CD4-positive, alpha-beta memory T cell (primary cell): ENCODE measurements at regions of chr7 and their contacts with region 1.

Region 1: GRCh38 chr7:85023045-85023712 is 163.7 kb downstream of the SEMA3D start:
- DNase-seq: peak; percentile 7 to 27 (median 16)
- H3K4me3 ChIP-seq: no peak overlapping the region
- H3K4me3 Mint-ChIP-seq: no peak overlapping the region
- H3K27ac ChIP-seq: no peak overlapping the region
- H3K27ac Mint-ChIP-seq: no peak overlapping the region
- H3K4me1 ChIP-seq: no peaks in the 10 kb centered on the region
- H3K4me1 Mint-ChIP-seq: no peaks in the 10 kb centered on the region
- H3K27me3 ChIP-seq: no peaks in the 10 kb centered on the region
- H3K27me3 Mint-ChIP-seq: no peaks in the 10 kb centered on the region

Region 2: GRCh38 chr7:83936056-83936708 is 1087.0 kb before region 1 on chr7:
- CTCF ChIA-PET with region 1: interaction called, 6 read pairs
- POLR2A ChIA-PET with region 1: no interaction called
- intact Hi-C with region 1: loop called (anchors 1 kb)
- DNase-seq: peak in 4 of 5 donors; percentile 20 to 41 (median 26)
- H3K4me3 ChIP-seq: no peak overlapping the region
- H3K4me3 Mint-ChIP-seq: no peak overlapping the region
- H3K27ac ChIP-seq: no peak overlapping the region
- H3K27ac Mint-ChIP-seq: no peak overlapping the region
- H3K4me1 ChIP-seq: no peaks in the 10 kb centered on the region
- H3K4me1 Mint-ChIP-seq: peaks cover 0 to 1% (median 0%) of the 10 kb centered on the region in 4 donors
- H3K27me3 ChIP-seq: no peaks in the 10 kb centered on the region
- H3K27me3 Mint-ChIP-seq: no peaks in the 10 kb centered on the region

Region 3: GRCh38 chr7:83976295-83976694 is 1046.9 kb before region 1 on chr7:
- CTCF ChIA-PET with region 1: interaction called, 3 read pairs
- POLR2A ChIA-PET with region 1: no interaction called
- intact Hi-C with region 1: loop called (anchors 1 kb)
- DNase-seq: peak in 4 of 5 donors; percentile 18 to 33 (median 24)
- H3K4me3 ChIP-seq: no peak overlapping the region
- H3K4me3 Mint-ChIP-seq: no peak overlapping the region
- H3K27ac ChIP-seq: no peak overlapping the region
- H3K27ac Mint-ChIP-seq: no peak overlapping the region
- H3K4me1 ChIP-seq: no peaks in the 10 kb centered on the region
- H3K4me1 Mint-ChIP-seq: no peaks in the 10 kb centered on the region
- H3K27me3 ChIP-seq: no peaks in the 10 kb centered on the region
- H3K27me3 Mint-ChIP-seq: no peaks in the 10 kb centered on the region

Region 4: GRCh38 chr7:84194543-84195271 is 828.5 kb before region 1 on chr7 and contains the start of gene SEMA3A:
- CTCF ChIA-PET with region 1: no interaction called
- POLR2A ChIA-PET with region 1: no interaction called
- intact Hi-C with region 1: loop called (anchors 10 kb)
- DNase-seq: peak in 4 of 5 donors; percentile 6 to 22 (median 14)
- H3K4me3 ChIP-seq: peak within 1 kb of the TSS in 1 of 2 donors; percentile 27
- H3K4me3 Mint-ChIP-seq: peak within 1 kb of the TSS; percentile 85 to 92 (median 89)
- H3K27ac ChIP-seq: no peak within 1 kb of the TSS
- H3K27ac Mint-ChIP-seq: peak within 1 kb of the TSS in 5 of 7 donors; percentile 61 to 83 (median 81)
- H3K4me1 ChIP-seq: no peaks in the 10 kb centered on the region
- H3K4me1 Mint-ChIP-seq: peaks cover 4 to 16% (median 9%) of the 10 kb centered on the region in 4 donors
- H3K27me3 ChIP-seq: no peaks in the 10 kb centered on the region
- H3K27me3 Mint-ChIP-seq: no peaks in the 10 kb centered on the region
- total RNA-seq, gene SEMA3A: 0.38 to 0.78 TPM

Region 5: DNA sequence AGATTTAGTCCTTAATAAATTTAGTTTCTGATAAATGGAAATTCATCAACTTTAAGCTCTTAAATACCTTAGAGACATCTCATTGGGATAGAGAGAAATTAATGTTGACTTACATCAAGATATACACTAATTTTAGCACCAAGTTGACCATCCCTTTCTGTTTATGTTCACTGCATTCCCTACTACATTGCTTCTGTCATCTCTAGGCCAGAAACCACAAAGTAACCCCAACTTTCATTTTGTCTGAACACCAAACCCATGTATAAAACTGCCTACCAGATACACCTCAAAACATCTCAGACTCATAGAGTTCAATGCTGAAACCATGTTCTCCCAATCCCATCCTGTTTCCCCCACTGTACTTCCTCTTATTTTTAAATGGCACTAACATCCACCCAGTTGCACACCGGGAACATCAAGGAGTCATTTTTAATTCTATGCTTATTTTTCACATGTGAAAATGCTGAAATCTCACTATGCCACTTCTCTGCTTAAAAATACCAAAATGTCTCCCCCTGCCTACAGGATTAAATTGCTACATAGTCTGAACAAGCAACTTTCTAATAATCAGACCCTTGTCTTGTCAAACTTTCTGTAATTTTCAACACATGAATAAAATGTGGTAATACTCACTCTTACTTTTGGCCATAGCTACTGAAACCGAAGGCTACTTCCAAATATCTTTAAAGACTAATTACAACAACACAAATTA is 38.0 kb before region 1 on chr7:
- CTCF ChIA-PET with region 1: no interaction called
- POLR2A ChIA-PET with region 1: no interaction called
- intact Hi-C with region 1: no loop called
- DNase-seq: no peak
- H3K4me3 ChIP-seq: no peak overlapping the region
- H3K4me3 Mint-ChIP-seq: no peak overlapping the region
- H3K27ac ChIP-seq: no peak overlapping the region
- H3K27ac Mint-ChIP-seq: no peak overlapping the region
- H3K4me1 ChIP-seq: no peaks in the 10 kb centered on the region
- H3K4me1 Mint-ChIP-seq: no peaks in the 10 kb centered on the region
- H3K27me3 ChIP-seq: no peaks in the 10 kb centered on the region
- H3K27me3 Mint-ChIP-seq: no peaks in the 10 kb centered on the region

Region 6: DNA sequence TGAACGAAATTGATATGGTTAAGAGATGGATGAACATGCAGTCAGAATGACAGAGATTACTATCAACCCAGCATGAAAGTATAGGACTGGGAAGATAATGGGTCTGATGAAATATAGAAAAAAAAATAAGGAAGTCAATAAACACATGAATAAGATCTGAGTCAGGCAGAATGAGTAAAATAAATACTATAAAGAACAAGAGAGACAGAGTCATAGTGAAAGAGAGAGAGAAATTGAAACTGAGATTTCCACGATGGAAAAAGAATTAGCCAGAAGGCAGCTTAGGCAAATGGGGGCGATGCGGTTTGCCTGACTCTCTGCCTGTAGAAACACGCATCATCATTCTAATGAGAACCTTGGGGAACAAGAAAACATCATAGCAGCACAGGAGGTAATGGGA is 137.0 kb after region 1 on chr7:
- CTCF ChIA-PET with region 1: no interaction called
- POLR2A ChIA-PET with region 1: no interaction called
- intact Hi-C with region 1: no loop called
- DNase-seq: no peak
- H3K4me3 ChIP-seq: no peak overlapping the region
- H3K4me3 Mint-ChIP-seq: no peak overlapping the region
- H3K27ac ChIP-seq: no peak overlapping the region
- H3K27ac Mint-ChIP-seq: no peak overlapping the region
- H3K4me1 ChIP-seq: no peaks in the 10 kb centered on the region
- H3K4me1 Mint-ChIP-seq: no peaks in the 10 kb centered on the region
- H3K27me3 ChIP-seq: no peaks in the 10 kb centered on the region
- H3K27me3 Mint-ChIP-seq: no peaks in the 10 kb centered on the region